Calu3 (cell line): ENCODE measurements at regions of chr1 and their contacts with region 1.

Region 1: DNA sequence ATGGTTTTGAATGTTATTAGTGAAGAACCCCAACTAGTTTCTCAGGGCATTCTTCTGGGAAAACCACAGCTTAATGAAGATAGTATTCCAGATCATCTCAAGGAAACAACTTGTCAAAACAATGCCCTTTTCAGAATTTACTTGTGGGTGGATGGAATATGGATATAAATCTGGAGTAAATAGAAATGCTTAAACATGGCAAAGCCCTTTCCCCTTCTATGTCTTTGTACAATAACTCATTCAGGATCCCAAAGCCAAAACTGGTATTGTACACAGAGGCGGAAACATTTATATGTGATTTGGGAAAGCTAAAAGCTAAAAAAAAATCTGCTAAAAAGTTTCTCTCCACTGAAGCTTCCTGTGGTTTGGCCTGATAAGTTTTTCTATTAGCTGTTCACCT is 55.5 kb upstream of the RGS5 start:
- DNase-seq: no peak
- H3K4me3 Mint-ChIP-seq: no peak overlapping the region
- H3K27ac Mint-ChIP-seq: no peak overlapping the region
- H3K4me1 Mint-ChIP-seq: no peaks in the 10 kb centered on the region
- H3K27me3 Mint-ChIP-seq: no peaks in the 10 kb centered on the region
- CTCF ChIP-seq: no peak

Region 2: DNA sequence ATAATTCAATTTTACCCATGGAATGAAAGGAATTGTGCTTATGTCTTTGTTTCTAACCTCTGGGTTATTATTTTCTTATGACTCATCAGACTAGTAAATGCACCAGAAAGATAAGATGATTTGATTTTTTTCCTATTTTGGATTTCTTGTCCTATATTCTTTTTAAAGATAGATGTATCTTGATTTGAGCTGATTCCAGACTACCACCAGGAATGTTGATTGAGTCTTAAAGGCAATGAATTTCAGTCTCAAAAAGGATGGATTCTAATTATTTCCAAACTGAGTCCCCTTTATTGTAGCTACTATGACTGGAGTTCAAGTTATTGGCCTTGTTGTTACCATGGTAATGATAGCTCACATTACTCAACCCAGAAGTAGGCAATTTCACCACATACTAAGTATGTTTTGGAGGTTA is 284.8 kb before region 1 on chr1:
- CTCF ChIA-PET with region 1: no interaction called
- intact Hi-C with region 1: no loop called
- DNase-seq: no peak
- H3K4me3 Mint-ChIP-seq: no peak overlapping the region
- H3K27ac Mint-ChIP-seq: no peak overlapping the region
- H3K4me1 Mint-ChIP-seq: no peaks in the 10 kb centered on the region
- H3K27me3 Mint-ChIP-seq: no peaks in the 10 kb centered on the region
- CTCF ChIP-seq: no peak

Region 3: DNA sequence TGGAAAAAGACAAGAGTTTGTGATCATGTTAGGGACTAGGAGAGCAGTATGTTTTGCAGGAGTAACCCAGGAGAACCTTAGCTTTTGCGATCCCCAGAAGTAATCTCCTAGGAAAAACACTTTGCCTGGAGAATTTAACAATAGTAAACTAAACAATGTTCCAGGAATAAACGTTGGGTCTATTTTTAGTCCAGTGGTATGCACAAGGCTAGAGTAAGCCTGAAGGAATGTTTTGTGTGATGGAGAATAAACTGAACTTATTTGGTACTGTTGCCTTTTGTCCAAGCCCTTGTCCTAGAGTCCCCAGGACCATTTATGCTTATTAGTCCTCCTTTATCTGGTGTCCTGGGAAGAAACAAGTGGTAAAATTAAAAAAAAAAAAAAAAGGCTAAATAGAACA is 26.8 kb before region 1 on chr1:
- CTCF ChIA-PET with region 1: no interaction called
- intact Hi-C with region 1: loop called (anchors 1 kb)
- DNase-seq: no peak
- H3K4me3 Mint-ChIP-seq: no peak overlapping the region
- H3K27ac Mint-ChIP-seq: no peak overlapping the region
- H3K4me1 Mint-ChIP-seq: no peaks in the 10 kb centered on the region
- H3K27me3 Mint-ChIP-seq: no peaks in the 10 kb centered on the region
- CTCF ChIP-seq: no peak